ENCODE measurements at regions of chr5 and their contacts with region 1.

Region 1: GRCh38 chr5:157743163-157744050 is at the start of gene LSM11:
- DNase-seq: peak; percentile 95
- total RNA-seq, gene LSM11: 1.5 TPM

Region 2: DNA sequence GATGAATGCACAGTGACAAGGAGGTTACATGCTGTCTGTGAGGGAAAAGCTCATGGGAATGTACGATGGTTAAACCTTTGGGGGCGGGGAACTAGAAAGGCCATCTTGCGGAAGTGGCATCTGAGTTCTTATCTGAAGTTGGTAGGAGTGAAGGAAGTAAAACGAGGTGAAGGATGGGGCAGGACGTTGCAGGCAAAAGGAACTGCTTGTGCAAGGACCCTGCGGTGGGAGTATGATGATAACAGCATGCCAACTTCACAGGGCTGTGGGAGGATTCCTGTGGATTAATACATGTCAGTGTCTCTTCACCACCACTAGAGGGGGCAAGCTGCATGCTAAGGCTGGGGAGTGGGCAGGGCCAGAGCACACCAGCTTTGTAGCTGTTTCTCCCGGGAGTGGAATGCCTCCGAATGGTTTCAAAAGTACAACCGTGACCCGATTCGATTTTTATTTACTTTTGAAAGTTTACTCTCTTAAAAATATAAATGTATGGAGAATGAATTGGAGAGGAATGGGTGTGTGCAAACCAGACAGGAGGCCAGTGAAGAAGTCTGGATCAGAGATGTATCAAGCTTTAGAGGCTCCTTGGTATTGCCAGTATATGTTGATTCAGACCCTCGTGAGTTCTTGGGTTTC is 415.0 kb before region 1 on chr5:
- intact Hi-C with region 1: loop called (anchors 5 kb)
- DNase-seq: peak; percentile 86